ENCODE measurements at regions of chr11 and their contacts with region 1.

Region 1: GRCh38 chr11:10162716-10163115 is 131.3 kb downstream of the SBF2 start:
- DNase-seq: no peak
- ATAC-seq: no peak
- H3K4me3 ChIP-seq: no peak overlapping the region
- H3K27ac ChIP-seq: no peak overlapping the region
- H3K4me1 ChIP-seq: peaks cover 40% of the 10 kb centered on the region
- H3K27me3 ChIP-seq: no peaks in the 10 kb centered on the region
- CTCF ChIP-seq: no peak

Region 2: DNA sequence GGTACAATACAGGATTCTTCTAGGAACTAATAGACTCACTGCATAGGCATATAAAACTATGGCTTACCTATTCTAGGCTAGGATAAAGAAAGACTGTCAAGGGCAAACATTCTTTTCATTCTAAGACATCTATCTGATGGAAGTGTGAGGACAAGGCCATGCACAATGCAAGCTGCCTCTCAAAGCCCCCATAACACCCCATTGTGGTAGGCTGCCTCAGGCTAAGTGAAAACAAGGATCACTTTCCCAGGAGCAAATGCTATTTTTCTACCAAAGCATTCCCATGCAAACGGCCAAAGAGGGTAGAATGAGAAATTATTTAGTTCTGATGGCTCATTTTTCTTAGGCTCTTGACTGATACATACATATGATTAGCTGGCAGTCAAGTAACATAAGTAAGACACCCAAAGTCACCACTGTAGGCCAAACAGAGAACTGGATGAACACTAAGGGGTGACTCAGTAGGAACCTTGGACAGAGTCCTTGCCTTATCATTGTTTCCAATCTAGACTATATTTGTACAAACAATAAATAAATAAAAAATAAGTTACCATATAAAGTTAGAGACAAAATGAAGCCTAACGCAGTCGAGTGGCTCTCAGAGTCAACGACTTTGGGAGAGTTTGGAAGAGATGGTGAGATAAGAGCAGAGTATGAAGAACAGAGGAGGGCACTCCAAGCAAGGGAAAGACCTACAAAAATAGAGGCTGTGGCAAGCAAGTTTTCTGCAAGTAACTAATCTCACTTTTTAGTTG is 172.3 kb before region 1 on chr11:
- CTCF ChIA-PET with region 1: no interaction called
- POLR2A ChIA-PET with region 1: no interaction called
- intact Hi-C with region 1: loop called (anchors 10 kb)
- DNase-seq: peak; percentile 71
- ATAC-seq: peak; percentile 98
- H3K4me3 ChIP-seq: no peak overlapping the region
- H3K27ac ChIP-seq: 0 out of 2 replicates have a peak overlapping the region, but pooled peaks have one; percentile 5
- H3K4me1 ChIP-seq: peaks cover 14% of the 10 kb centered on the region
- H3K27me3 ChIP-seq: no peaks in the 10 kb centered on the region
- CTCF ChIP-seq: peak; percentile 45

Region 3: GRCh38 chr11:10139656-10140055 is 23.1 kb before region 1 on chr11:
- CTCF ChIA-PET with region 1: no interaction called
- POLR2A ChIA-PET with region 1: no interaction called
- intact Hi-C with region 1: loop called (anchors 2 kb)
- DNase-seq: peak; percentile 69
- ATAC-seq: peak; percentile 100
- H3K4me3 ChIP-seq: no peak overlapping the region
- H3K27ac ChIP-seq: no peak overlapping the region
- H3K4me1 ChIP-seq: peaks cover 16% of the 10 kb centered on the region
- H3K27me3 ChIP-seq: no peaks in the 10 kb centered on the region
- CTCF ChIP-seq: no peak

Region 4: DNA sequence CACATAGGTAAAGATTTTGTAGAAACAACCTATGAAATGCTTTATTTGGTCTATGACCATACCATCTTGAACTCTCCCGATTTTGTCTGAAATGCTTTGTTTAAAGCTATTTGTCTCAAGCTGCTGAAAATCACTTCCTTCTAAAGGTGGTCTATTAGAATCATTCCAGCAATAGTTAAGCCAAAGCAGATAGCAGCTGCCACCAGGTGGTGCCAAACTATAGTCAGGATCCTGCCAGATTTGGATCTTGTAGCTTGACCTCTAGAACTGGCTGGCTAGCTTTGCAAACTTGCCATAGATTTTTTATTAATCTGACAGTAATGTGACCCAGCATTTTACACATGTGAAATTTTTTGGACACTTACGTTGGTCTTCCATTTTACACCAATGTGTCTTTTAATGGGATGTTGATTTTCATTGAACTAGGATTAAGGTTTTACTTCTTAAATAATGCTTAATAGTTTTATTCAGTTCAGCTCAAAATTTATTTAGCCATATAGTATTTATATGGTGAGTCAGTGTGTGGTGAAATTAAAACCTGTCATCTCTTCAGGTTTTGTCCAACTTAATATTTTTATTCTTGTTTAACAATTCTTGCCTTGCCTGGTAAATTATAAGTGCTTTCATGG is 608.0 kb after region 1 on chr11:
- CTCF ChIA-PET with region 1: no interaction called
- POLR2A ChIA-PET with region 1: no interaction called
- intact Hi-C with region 1: no loop called
- DNase-seq: peak; percentile 72
- ATAC-seq: peak; percentile 76
- H3K4me3 ChIP-seq: no peak overlapping the region
- H3K27ac ChIP-seq: no peak overlapping the region
- H3K4me1 ChIP-seq: no peaks in the 10 kb centered on the region
- H3K27me3 ChIP-seq: no peaks in the 10 kb centered on the region
- CTCF ChIP-seq: peak; percentile 91